ENCODE measurements at regions of chr12 and their contacts with region 1.

Region 1: GRCh38 chr12:3872800-3873636 is at the start of gene PARP11:
- DNase-seq: peak; percentile 95 to 99 (median 98)
- ATAC-seq: peak; percentile 94
- H3K4me3 ChIP-seq: peak within 1 kb of the TSS; percentile 79
- H3K4me3 Mint-ChIP-seq: peak within 1 kb of the TSS; percentile 95
- H3K27ac ChIP-seq: peak within 1 kb of the TSS; percentile 88 to 97
- H3K27ac Mint-ChIP-seq: peak within 1 kb of the TSS; percentile 99
- H3K4me1 ChIP-seq: peaks cover 30% of the 10 kb centered on the region
- H3K4me1 Mint-ChIP-seq: peaks cover 59% of the 10 kb centered on the region
- H3K27me3 ChIP-seq: no peaks in the 10 kb centered on the region
- H3K27me3 Mint-ChIP-seq: no peaks in the 10 kb centered on the region
- CTCF ChIP-seq: no peak
- total RNA-seq, gene PARP11: 13.4 TPM

Region 2: GRCh38 chr12:2890388-2891239 is 982.4 kb before region 1 on chr12 and contains the start of gene TULP3:
- CTCF ChIA-PET with region 1: no interaction called
- POLR2A ChIA-PET with region 1: no interaction called
- intact Hi-C with region 1: loop called in 1 of 2 experiments (anchors 10 kb)
- DNase-seq: peak; percentile 97 to 99 (median 98)
- ATAC-seq: peak; percentile 98
- H3K4me3 ChIP-seq: peak within 1 kb of the TSS; percentile 100
- H3K4me3 Mint-ChIP-seq: peak within 1 kb of the TSS; percentile 97
- H3K27ac ChIP-seq: peak within 1 kb of the TSS; percentile 74 to 77
- H3K27ac Mint-ChIP-seq: peak within 1 kb of the TSS; percentile 83
- H3K4me1 ChIP-seq: peaks cover 19% of the 10 kb centered on the region
- H3K4me1 Mint-ChIP-seq: peaks cover 29% of the 10 kb centered on the region
- H3K27me3 ChIP-seq: no peaks in the 10 kb centered on the region
- H3K27me3 Mint-ChIP-seq: no peaks in the 10 kb centered on the region
- CTCF ChIP-seq: no peak
- total RNA-seq, gene TULP3: 4.2 to 5.5 TPM

Region 3: DNA sequence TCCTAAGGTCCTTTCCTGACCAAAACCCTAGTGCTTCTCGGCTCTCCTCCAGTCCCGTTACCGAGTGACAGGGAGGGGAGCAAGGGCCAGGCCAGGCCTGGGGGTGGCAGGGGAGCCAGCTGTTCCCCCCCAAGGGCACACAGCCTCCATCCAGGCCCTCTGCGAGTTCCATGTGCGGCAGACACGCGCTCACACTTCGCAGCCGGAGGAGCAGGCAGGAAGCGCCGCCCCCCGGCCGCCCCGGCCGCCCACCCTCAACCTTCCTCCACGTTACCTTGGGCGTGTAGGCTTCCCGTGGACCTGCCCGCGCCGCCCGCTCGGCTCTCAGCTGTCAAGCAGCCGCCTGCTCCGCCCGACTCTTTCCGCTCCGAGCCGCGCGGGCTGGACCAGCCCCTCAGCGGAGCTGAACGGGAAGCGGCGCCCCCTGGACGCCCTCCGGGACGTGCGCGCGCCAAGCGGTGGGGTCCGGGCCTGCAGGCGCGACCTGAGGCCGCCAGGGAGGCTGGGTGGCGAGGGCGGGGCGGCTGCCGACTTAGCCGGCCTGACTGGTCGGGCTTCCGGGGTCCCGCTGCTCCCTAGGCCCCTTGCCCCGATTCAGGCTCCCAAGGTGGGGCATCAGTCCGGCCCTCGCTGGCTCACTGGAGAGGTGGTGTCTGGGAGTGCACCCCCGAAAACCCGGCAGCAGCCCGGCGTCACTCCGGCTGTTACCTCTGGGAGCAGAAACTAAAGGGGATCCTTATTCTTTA is 120.1 kb before region 1 on chr12 and contains the start of gene CRACR2A:
- CTCF ChIA-PET with region 1: no interaction called
- POLR2A ChIA-PET with region 1: interaction called, 3 read pairs
- intact Hi-C with region 1: loop called in 1 of 2 experiments (anchors 5 kb)
- DNase-seq: peak; percentile 70 to 92 (median 79)
- ATAC-seq: peak; percentile 78
- H3K4me3 ChIP-seq: peak within 1 kb of the TSS; percentile 92
- H3K4me3 Mint-ChIP-seq: peak within 1 kb of the TSS; percentile 89
- H3K27ac ChIP-seq: peak within 1 kb of the TSS; percentile 92 to 95
- H3K27ac Mint-ChIP-seq: peak within 1 kb of the TSS; percentile 92
- H3K4me1 ChIP-seq: peaks cover 68% of the 10 kb centered on the region
- H3K4me1 Mint-ChIP-seq: peaks cover 71% of the 10 kb centered on the region
- H3K27me3 ChIP-seq: no peaks in the 10 kb centered on the region
- H3K27me3 Mint-ChIP-seq: no peaks in the 10 kb centered on the region
- CTCF ChIP-seq: peak; percentile 80
- total RNA-seq, gene CRACR2A: 23.5 to 27.5 TPM

Region 4: DNA sequence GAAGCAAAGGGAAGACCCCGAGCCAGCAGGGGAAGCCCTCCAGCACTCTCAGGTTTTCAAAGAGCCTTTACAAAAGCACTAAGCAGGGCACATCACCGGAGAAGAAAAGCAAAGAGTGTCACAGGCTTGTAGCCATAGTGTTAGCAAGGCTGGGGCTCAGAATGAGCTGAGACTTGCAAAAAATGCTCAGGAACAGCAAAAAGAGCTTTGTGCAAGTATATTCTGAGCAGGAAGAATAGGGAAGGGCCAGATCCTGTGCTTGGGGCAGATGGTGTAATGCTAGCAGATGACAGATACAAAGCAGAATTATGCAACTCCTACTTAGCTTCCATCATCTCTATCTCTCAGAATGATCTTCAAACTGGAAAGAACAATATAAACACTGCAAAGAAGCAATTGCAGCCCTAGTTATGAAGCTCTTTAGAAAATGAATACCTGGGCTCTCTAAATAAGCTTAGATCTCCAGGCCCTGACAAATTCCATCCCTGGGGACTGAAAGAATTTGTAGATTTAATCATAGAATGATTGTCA is 23.8 kb after region 1 on chr12:
- CTCF ChIA-PET with region 1: no interaction called
- POLR2A ChIA-PET with region 1: interaction called, 12 read pairs
- intact Hi-C with region 1: no loop called
- DNase-seq: peak in 3 of 14 experiments; percentile 36 to 43 (median 42)
- ATAC-seq: peak; percentile 33
- H3K4me3 ChIP-seq: peak overlapping the region; percentile 33
- H3K4me3 Mint-ChIP-seq: peak overlapping the region; percentile 76
- H3K27ac ChIP-seq: peak overlapping the region; percentile 69 to 87
- H3K27ac Mint-ChIP-seq: no peak overlapping the region
- H3K4me1 ChIP-seq: peaks cover 78% of the 10 kb centered on the region
- H3K4me1 Mint-ChIP-seq: peaks cover 48% of the 10 kb centered on the region
- H3K27me3 ChIP-seq: no peaks in the 10 kb centered on the region
- H3K27me3 Mint-ChIP-seq: no peaks in the 10 kb centered on the region
- CTCF ChIP-seq: no peak

Region 5: GRCh38 chr12:4269279-4269991 is 396.4 kb after region 1 on chr12:
- CTCF ChIA-PET with region 1: no interaction called
- POLR2A ChIA-PET with region 1: interaction called, 14 read pairs
- intact Hi-C with region 1: loop called in 1 of 2 experiments (anchors 1 kb)
- DNase-seq: peak; percentile 85 to 96 (median 90)
- ATAC-seq: peak; percentile 32
- H3K4me3 ChIP-seq: peak overlapping the region; percentile 95
- H3K4me3 Mint-ChIP-seq: peak overlapping the region; percentile 96
- H3K27ac ChIP-seq: peak overlapping the region; percentile 79 to 99
- H3K27ac Mint-ChIP-seq: peak overlapping the region; percentile 99
- H3K4me1 ChIP-seq: peaks cover 46% of the 10 kb centered on the region
- H3K4me1 Mint-ChIP-seq: peaks cover 31% of the 10 kb centered on the region
- H3K27me3 ChIP-seq: no peaks in the 10 kb centered on the region
- H3K27me3 Mint-ChIP-seq: peaks cover 6% of the 10 kb centered on the region
- CTCF ChIP-seq: no peak

Region 6: GRCh38 chr12:4320853-4321701 is 448.1 kb after region 1 on chr12 and contains the start of gene TIGAR:
- CTCF ChIA-PET with region 1: no interaction called
- POLR2A ChIA-PET with region 1: interaction called, 4 read pairs
- intact Hi-C with region 1: loop called in 1 of 2 experiments (anchors 5 kb)
- DNase-seq: peak; percentile 75 to 97 (median 86)
- ATAC-seq: peak; percentile 94
- H3K4me3 ChIP-seq: peak within 1 kb of the TSS; percentile 85
- H3K4me3 Mint-ChIP-seq: peak within 1 kb of the TSS; percentile 84
- H3K27ac ChIP-seq: peak within 1 kb of the TSS; percentile 80 to 86
- H3K27ac Mint-ChIP-seq: peak within 1 kb of the TSS; percentile 84
- H3K4me1 ChIP-seq: peaks cover 26% of the 10 kb centered on the region
- H3K4me1 Mint-ChIP-seq: peaks cover 44% of the 10 kb centered on the region
- H3K27me3 ChIP-seq: no peaks in the 10 kb centered on the region
- H3K27me3 Mint-ChIP-seq: no peaks in the 10 kb centered on the region
- CTCF ChIP-seq: no peak
- total RNA-seq, gene TIGAR: 5.3 to 7.1 TPM

Region 7: GRCh38 chr12:4538207-4539160 is 665.5 kb after region 1 on chr12 and contains the start of gene RAD51AP1:
- CTCF ChIA-PET with region 1: no interaction called
- POLR2A ChIA-PET with region 1: no interaction called
- intact Hi-C with region 1: loop called (anchors 10 kb)
- DNase-seq: peak; percentile 89 to 99 (median 94)
- ATAC-seq: peak; percentile 99
- H3K4me3 ChIP-seq: peak within 1 kb of the TSS; percentile 80
- H3K4me3 Mint-ChIP-seq: peak within 1 kb of the TSS; percentile 98
- H3K27ac ChIP-seq: peak within 1 kb of the TSS; percentile 81 to 95
- H3K27ac Mint-ChIP-seq: peak within 1 kb of the TSS; percentile 99
- H3K4me1 ChIP-seq: peaks cover 7% of the 10 kb centered on the region
- H3K4me1 Mint-ChIP-seq: peaks cover 37% of the 10 kb centered on the region
- H3K27me3 ChIP-seq: no peaks in the 10 kb centered on the region
- H3K27me3 Mint-ChIP-seq: no peaks in the 10 kb centered on the region
- CTCF ChIP-seq: no peak
- total RNA-seq, gene RAD51AP1: 0.45 to 0.93 TPM